Left cardiac atrium (tissue), 4 donors: ENCODE measurements at regions of chr17 and their contacts with region 1.

Region 1: DNA sequence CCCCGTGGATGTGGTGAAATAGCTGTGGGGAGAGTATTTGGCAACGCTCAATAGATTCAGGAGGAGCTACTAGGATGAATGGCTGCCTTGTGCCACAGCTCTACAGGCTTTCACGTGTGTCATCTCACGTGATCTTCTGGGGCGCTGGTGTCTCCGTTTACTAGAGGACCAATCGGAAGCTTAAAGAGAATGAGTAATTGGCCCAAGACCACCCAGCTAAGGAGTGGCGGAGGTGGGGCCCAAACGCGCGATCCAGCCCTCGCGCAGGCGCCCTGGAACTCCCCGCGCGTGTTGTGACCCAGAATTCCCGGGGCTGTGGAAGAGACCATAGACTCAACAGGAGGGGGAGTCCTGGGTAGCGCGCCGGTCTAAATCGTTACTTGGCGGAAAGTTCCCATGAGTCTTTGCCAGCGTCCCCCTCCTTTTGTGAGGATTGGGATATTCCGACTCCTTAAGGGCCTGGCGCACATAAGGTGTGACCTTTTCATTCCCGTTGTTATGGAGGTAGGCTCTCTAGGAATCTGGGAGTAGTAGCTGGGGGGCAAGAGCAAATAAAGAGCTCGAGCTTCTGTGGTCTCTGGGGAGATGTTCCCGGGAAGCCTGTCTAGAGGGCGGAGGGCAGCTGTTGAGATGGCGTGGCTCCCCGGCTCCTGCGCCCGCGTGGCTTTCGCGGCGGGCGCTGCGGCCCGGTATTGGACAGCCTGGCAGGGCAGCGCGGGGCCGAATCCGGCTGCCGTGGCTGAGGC is 23.4 kb downstream of the TRPV2 start:
- DNase-seq: peak; percentile 95
- ATAC-seq: peak; percentile 93 to 94

Region 2: DNA sequence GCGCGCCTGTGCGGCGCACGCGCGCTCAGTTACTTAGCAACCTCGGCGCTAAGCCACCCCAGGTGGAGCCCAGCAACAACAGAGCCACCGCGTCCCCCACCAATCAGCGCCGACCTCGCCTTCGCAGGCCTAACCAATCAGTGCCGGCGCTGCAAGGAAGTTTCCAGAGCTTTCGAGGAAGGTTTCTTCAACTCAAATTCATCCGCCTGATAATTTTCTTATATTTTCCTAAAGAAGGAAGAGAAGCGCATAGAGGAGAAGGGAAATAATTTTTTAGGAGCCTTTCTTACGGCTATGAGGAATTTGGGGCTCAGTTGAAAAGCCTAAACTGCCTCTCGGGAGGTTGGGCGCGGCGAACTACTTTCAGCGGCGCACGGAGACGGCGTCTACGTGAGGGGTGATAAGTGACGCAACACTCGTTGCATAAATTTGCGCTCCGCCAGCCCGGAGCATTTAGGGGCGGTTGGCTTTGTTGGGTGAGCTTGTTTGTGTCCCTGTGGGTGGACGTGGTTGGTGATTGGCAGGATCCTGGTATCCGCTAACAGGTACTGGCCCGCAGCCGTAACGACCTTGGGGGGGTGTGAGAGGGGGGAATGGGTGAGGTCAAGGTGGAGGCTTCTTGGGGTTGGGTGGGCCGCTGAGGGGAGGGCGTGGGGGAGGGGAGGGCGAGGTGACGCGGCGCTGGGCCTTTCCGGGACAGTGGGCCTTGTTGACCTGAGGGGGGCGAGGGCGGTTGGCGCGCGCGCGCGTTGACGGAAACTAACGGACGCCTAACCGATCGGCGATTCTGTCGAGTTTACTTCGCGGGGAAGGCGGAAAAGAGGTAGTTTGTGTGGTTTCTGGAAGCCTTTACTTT is 57.9 kb before region 1 on chr17 and contains the start of gene UBB:
- intact Hi-C with region 1: loop called (anchors 10 kb)
- DNase-seq: peak; percentile 97
- ATAC-seq: peak; percentile 98 to 99
- total RNA-seq, gene UBB: 1,163 to 1,195 TPM

Region 3: DNA sequence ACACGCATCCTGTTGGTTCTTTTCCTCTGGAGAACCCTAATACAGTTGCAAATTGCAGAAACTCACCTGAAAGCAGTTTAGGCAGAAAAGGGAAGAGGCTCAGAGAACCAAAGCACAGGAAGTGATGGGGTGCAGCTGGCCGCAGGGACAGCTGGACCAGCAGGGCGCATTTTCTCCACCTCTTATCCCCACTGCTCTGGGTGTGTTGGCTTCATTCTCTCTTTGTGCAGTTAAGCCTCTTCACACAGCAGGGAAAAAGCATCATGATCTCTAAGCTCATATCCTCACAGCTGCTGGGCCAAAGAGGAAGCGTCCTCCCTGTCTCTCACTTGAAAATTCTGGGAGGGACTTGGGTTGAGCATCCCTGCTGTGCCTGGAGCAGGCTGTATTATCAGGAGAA is 73.3 kb after region 1 on chr17:
- intact Hi-C with region 1: no loop called
- DNase-seq: no peak
- ATAC-seq: no peak